ENCODE measurements at regions of chr19 and their contacts with region 1.

Region 1: DNA sequence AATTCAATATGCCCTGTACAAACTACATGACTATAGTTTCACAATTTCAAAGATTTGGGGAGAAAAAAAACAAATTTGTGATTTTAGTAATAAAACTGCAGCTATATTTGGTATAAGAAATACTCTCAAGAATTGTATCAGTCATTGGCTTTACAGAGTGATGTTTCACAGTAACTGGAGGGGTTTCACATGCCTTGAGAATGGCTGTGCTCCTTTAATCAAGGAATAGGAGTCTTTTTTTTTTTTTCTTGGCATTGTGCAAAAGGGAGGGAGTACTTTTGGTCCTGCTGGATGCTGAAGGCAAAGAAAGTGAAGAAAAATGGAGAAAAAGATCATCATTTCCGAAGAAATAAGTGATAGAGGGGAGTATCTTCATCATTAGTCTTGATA is 6.8 kb downstream of the ZNF507 start:
- DNase-seq: no peak
- ATAC-seq: no peak
- H3K4me3 ChIP-seq: no peak overlapping the region
- H3K27ac ChIP-seq: no peak overlapping the region
- H3K4me1 ChIP-seq: peaks cover 44% of the 10 kb centered on the region
- CTCF ChIP-seq: no peak
- EP300 ChIP-seq: no peak
- POLR2A ChIP-seq: no peak
- RAD21 ChIP-seq: no peak

Region 2: GRCh38 chr19:32363197-32363596 is 11.0 kb after region 1 on chr19:
- CTCF ChIA-PET with region 1: interaction called, 70 read pairs
- POLR2A ChIA-PET with region 1: no interaction called
- DNase-seq: peak in 1 of 2 experiments; percentile 65
- ATAC-seq: peak; percentile 12 to 42; a peak in 5 of 6 replicates
- H3K4me3 ChIP-seq: no peak overlapping the region
- H3K27ac ChIP-seq: peak overlapping the region; percentile 45 to 50; a peak in 5 of 6 replicates
- H3K4me1 ChIP-seq: peaks cover 33% of the 10 kb centered on the region
- CTCF ChIP-seq: no peak
- EP300 ChIP-seq: peak; percentile 5 to 21; a peak in 1 of 5 replicates
- POLR2A ChIP-seq: no peak
- RAD21 ChIP-seq: no peak

Measured in A549 (cell line).